ENCODE measurements at regions of chr19 and their contacts with region 1.

Region 1: GRCh38 chr19:45178262-45179071 is at the start of gene BLOC1S3:
- DNase-seq: peak; percentile 99 to 100 (median 100)
- ATAC-seq: peak; percentile 85
- H3K4me3 ChIP-seq: peak within 1 kb of the TSS; percentile 93
- H3K4me3 Mint-ChIP-seq: peak within 1 kb of the TSS; percentile 87
- H3K27ac ChIP-seq: peak within 1 kb of the TSS; percentile 86 to 91
- H3K27ac Mint-ChIP-seq: peak within 1 kb of the TSS; percentile 84
- H3K4me1 ChIP-seq: peaks cover 57% of the 10 kb centered on the region
- H3K4me1 Mint-ChIP-seq: peaks cover 42% of the 10 kb centered on the region
- H3K27me3 ChIP-seq: no peaks in the 10 kb centered on the region
- H3K27me3 Mint-ChIP-seq: no peaks in the 10 kb centered on the region
- CTCF ChIP-seq: peak; percentile 32
- total RNA-seq, gene BLOC1S3: 14.7 to 18.8 TPM

Region 2: GRCh38 chr19:45001087-45001739 is 177.3 kb before region 1 on chr19 and contains the start of gene RELB:
- CTCF ChIA-PET with region 1: no interaction called
- POLR2A ChIA-PET with region 1: interaction called, 31 read pairs
- intact Hi-C with region 1: no loop called
- DNase-seq: peak; percentile 90 to 98 (median 94)
- ATAC-seq: peak; percentile 55
- H3K4me3 ChIP-seq: peak within 1 kb of the TSS; percentile 58
- H3K4me3 Mint-ChIP-seq: peak within 1 kb of the TSS; percentile 100
- H3K27ac ChIP-seq: peak within 1 kb of the TSS; percentile 98 to 100
- H3K27ac Mint-ChIP-seq: peak within 1 kb of the TSS; percentile 100
- H3K4me1 ChIP-seq: peaks cover 18% of the 10 kb centered on the region
- H3K4me1 Mint-ChIP-seq: peaks cover 10% of the 10 kb centered on the region
- H3K27me3 ChIP-seq: no peaks in the 10 kb centered on the region
- H3K27me3 Mint-ChIP-seq: no peaks in the 10 kb centered on the region
- CTCF ChIP-seq: no peak
- total RNA-seq, gene RELB: 91.6 to 92.5 TPM

Region 3: DNA sequence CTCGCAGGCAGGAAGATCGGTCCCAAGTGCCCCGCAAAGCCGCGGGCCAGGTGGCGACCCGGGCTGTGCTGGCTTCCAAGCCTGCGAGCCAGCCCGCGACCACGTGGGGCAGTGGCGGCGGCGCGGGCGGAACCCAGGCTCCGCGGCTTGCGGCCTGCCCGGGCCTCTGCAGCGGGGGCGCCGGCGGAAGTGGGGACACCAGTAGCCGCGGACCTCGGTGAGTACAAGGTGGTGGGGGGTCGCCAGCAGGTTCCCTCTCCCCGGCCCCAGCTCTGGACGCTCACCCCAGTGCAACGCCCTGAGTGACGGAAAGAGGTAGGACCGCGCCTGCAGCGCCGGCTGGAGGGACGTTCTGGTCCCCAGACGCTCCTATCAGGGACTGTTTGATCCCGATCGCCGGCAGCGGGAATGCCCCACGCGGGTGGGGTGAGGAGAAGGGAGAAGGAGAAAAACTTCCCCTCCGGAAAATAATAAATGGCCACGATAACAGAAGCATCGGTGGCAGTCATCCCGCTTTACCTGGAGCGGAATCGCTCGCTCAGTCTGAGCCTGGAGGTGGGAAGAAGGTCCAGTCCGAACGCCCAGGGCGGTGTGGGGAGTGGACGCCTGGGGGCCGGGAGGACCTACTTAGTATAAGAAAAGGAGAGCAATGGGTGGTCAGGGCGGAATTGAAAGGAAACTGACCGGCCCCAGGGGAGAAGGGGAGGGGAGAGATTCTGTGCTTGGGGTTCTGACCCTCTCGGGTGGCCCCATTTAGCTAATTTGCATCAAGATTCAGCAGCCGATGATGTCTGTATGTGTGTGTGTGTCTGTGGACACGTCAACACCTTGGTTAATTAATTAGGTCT is 99.2 kb before region 1 on chr19 and contains the start of gene GEMIN7:
- CTCF ChIA-PET with region 1: no interaction called
- POLR2A ChIA-PET with region 1: interaction called, 5 read pairs
- intact Hi-C with region 1: loop called in 1 of 2 experiments (anchors 1 kb)
- DNase-seq: peak; percentile 61 to 89 (median 73)
- ATAC-seq: peak; percentile 72
- H3K4me3 ChIP-seq: peak within 1 kb of the TSS; percentile 93
- H3K4me3 Mint-ChIP-seq: peak within 1 kb of the TSS; percentile 93
- H3K27ac ChIP-seq: peak within 1 kb of the TSS; percentile 41 to 75
- H3K27ac Mint-ChIP-seq: peak within 1 kb of the TSS; percentile 79
- H3K4me1 ChIP-seq: peaks cover 62% of the 10 kb centered on the region
- H3K4me1 Mint-ChIP-seq: peaks cover 45% of the 10 kb centered on the region
- H3K27me3 ChIP-seq: no peaks in the 10 kb centered on the region
- H3K27me3 Mint-ChIP-seq: no peaks in the 10 kb centered on the region
- CTCF ChIP-seq: no peak
- total RNA-seq, gene GEMIN7: 4.0 to 4.8 TPM

Region 4: DNA sequence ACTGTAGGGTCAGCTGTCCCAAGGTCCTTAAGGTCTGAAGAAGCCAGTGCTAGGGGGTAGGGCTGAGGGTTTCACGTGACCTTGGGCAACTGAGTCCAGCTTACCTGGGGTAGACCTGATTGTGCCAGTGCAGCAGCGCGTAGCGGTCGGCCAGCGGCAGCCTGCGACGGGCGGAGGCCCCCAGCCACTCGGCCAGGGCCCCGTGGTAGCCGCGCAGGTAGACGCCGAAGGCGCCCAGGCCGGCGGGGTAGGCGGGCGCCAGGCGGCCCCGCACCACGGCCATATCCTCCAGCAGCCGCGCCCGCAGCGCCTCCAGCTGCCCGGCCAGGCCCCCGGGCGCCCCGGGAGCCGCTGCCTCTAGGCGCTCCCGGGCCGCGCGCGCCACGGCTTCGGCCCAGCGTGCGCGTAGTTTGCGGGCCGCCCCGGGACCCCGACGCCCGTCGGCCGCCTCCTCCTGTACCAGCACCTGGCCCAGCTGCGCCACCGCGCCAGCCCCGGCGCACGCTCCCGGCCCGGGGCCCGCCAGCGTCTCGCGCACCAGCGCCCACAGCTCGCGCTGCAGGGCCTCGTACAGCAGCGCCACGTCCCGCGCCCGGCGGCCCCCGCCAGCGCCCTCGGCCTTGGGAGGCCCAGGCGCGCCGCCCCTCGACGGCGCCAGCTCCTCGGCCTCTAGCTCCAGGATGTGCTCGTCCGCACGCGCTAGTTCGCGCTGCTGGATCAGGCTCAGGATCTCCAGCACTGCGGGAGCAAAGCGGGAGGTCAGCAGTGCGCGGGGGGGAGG is 55.8 kb after region 1 on chr19:
- CTCF ChIA-PET with region 1: no interaction called
- POLR2A ChIA-PET with region 1: no interaction called
- intact Hi-C with region 1: no loop called
- DNase-seq: no peak
- ATAC-seq: no peak
- H3K4me3 ChIP-seq: no peak overlapping the region
- H3K4me3 Mint-ChIP-seq: no peak overlapping the region
- H3K27ac ChIP-seq: no peak overlapping the region
- H3K27ac Mint-ChIP-seq: no peak overlapping the region
- H3K4me1 ChIP-seq: peaks cover 4% of the 10 kb centered on the region
- H3K4me1 Mint-ChIP-seq: no peaks in the 10 kb centered on the region
- H3K27me3 ChIP-seq: peaks cover 4 to 16% of the 10 kb centered on the region in 2 experiments
- H3K27me3 Mint-ChIP-seq: peaks cover 57% of the 10 kb centered on the region
- CTCF ChIP-seq: no peak

Region 5: GRCh38 chr19:45250832-45251451 is 72.5 kb after region 1 on chr19 and contains the start of gene MARK4:
- CTCF ChIA-PET with region 1: interaction called, 3 read pairs
- POLR2A ChIA-PET with region 1: interaction called, 8 read pairs
- intact Hi-C with region 1: loop called in 1 of 2 experiments (anchors 5 kb)
- DNase-seq: peak; percentile 32 to 84 (median 52)
- ATAC-seq: peak; percentile 71
- H3K4me3 ChIP-seq: peak within 1 kb of the TSS; percentile 83
- H3K4me3 Mint-ChIP-seq: peak within 1 kb of the TSS; percentile 90
- H3K27ac ChIP-seq: no peak within 1 kb of the TSS
- H3K27ac Mint-ChIP-seq: peak within 1 kb of the TSS; percentile 72
- H3K4me1 ChIP-seq: peaks cover 56% of the 10 kb centered on the region
- H3K4me1 Mint-ChIP-seq: peaks cover 35% of the 10 kb centered on the region
- H3K27me3 ChIP-seq: no peaks in the 10 kb centered on the region
- H3K27me3 Mint-ChIP-seq: no peaks in the 10 kb centered on the region
- CTCF ChIP-seq: no peak
- total RNA-seq, gene MARK4: 18.1 to 19.8 TPM

Region 6: GRCh38 chr19:45692187-45693105 is 514.0 kb after region 1 on chr19 and contains the start of gene QPCTL:
- CTCF ChIA-PET with region 1: no interaction called
- POLR2A ChIA-PET with region 1: no interaction called
- intact Hi-C with region 1: loop called in 1 of 2 experiments (anchors 10 kb)
- DNase-seq: peak; percentile 92 to 99 (median 94)
- ATAC-seq: peak; percentile 87
- H3K4me3 ChIP-seq: peak within 1 kb of the TSS; percentile 85
- H3K4me3 Mint-ChIP-seq: peak within 1 kb of the TSS; percentile 96
- H3K27ac ChIP-seq: peak within 1 kb of the TSS; percentile 86 to 93
- H3K27ac Mint-ChIP-seq: peak within 1 kb of the TSS; percentile 95
- H3K4me1 ChIP-seq: peaks cover 39% of the 10 kb centered on the region
- H3K4me1 Mint-ChIP-seq: peaks cover 33% of the 10 kb centered on the region
- H3K27me3 ChIP-seq: no peaks in the 10 kb centered on the region
- H3K27me3 Mint-ChIP-seq: no peaks in the 10 kb centered on the region
- CTCF ChIP-seq: no peak
- total RNA-seq, gene QPCTL: 3.7 to 5.0 TPM

Measured in CD4-positive, alpha-beta T cell (primary cell).